ENCODE measurements at regions of chr9 and their contacts with region 1.

Region 1: GRCh38 chr9:123168586-123168985 is 99.8 kb downstream of the STRBP start:
- DNase-seq: no peak
- ATAC-seq: no peak
- H3K4me3 ChIP-seq: no peak overlapping the region
- H3K4me3 Mint-ChIP-seq: no peak overlapping the region
- H3K27ac ChIP-seq: peak overlapping the region in 1 of 2 donors; percentile 14
- H3K27ac Mint-ChIP-seq: peak overlapping the region; percentile 83
- H3K4me1 ChIP-seq: peaks cover 29 to 32% of the 10 kb centered on the region in 2 donors
- H3K4me1 Mint-ChIP-seq: peaks cover 70% of the 10 kb centered on the region
- H3K27me3 ChIP-seq: no peaks in the 10 kb centered on the region
- H3K27me3 Mint-ChIP-seq: no peaks in the 10 kb centered on the region
- CTCF ChIP-seq: no peak

Region 2: GRCh38 chr9:123131258-123131657 is 37.3 kb before region 1 on chr9:
- CTCF ChIA-PET with region 1: no interaction called
- POLR2A ChIA-PET with region 1: no interaction called
- intact Hi-C with region 1: loop called (anchors 5 kb)
- DNase-seq: no peak
- ATAC-seq: no peak
- H3K4me3 ChIP-seq: no peak overlapping the region
- H3K4me3 Mint-ChIP-seq: no peak overlapping the region
- H3K27ac ChIP-seq: no peak overlapping the region
- H3K27ac Mint-ChIP-seq: no peak overlapping the region
- H3K4me1 ChIP-seq: peaks cover 0 to 11% of the 10 kb centered on the region in 2 donors
- H3K4me1 Mint-ChIP-seq: peaks cover 19% of the 10 kb centered on the region
- H3K27me3 ChIP-seq: no peaks in the 10 kb centered on the region
- H3K27me3 Mint-ChIP-seq: no peaks in the 10 kb centered on the region
- CTCF ChIP-seq: no peak